ENCODE measurements at regions of chr16 and their contacts with region 1.

Region 1: DNA sequence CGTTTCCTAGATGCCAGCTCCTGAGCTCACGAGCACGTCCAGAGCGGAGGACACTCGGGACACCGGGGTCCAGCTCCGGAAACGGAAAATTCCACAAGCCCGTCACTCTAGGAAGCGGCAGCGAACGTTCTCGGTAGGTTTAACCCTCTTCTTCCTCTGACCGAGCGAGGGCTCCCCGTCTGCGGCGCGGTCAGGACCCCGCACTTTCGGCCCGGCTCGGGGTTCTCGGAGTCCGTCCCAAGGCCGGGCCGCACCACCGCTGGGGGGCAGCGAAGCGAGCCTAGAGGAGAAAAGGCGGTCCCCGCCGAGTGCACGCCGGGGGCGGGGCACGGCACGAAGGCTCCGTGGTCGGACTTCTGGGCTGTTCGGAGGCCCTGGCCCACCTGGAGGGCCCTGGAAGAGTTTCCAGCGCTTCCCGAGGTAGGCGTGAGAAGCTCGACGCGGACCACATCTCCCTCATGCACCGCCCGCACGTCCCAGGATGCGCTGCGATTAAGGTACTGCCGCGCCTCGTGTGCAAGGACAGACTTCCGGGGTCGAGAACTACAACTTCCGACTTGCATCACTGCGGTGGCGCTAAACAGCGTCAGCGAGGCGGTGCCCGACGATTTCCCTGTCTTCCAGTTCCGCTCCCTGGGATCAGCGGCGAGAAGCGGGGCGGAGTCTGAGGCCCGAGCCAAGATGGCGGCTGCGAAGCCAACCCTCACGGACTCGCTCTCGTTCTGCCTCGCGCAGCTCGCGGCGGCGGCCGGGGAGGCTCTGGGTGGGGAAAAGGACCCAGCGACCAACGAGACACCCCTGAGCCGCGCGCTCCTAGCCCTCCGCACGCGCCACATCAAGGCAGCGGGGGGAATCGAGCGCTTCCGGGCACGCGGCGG is at the start of gene ARMC5:
- DNase-seq: peak; percentile 96 to 100 (median 98)

Region 2: DNA sequence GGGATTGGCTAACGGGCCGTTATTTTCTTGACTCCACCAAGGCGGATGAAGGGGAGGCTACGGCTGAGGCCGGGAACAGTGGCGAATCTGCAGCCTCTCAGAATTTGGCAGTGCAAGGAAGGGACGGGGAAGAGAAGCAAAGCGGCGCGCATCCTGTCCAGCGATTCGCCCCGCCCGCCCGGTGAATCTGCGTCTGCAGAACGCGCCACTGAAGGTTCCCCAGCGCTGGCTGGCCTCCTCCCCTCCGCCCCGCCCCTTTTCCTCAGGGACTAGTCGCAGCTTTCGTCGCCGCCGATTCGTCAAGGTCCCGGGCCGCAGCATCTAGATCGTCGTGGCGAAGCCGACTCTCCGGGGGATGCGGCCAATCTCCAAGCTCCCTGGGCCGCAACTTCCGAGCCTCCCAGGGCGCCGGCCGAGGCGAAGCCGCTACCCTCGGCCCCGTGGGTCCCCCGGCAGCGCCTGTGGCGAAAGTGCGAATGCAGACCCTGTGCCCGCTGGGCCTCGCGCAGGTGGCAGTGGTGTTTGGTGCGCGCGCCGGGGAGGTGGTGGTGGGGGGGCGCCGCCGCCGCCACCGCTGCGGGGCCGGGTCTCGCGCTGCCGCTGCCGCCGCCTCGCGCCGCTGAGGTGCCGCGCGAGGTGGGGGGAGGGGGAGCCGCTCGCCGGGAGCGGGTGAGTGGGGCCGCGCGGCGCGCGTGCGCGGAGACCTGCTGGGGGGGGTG is 501.5 kb before region 1 on chr16 and contains the start of gene SETD1A:
- intact Hi-C with region 1: loop called (anchors 10 kb)
- DNase-seq: peak; percentile 94 to 100 (median 97)

Region 3: DNA sequence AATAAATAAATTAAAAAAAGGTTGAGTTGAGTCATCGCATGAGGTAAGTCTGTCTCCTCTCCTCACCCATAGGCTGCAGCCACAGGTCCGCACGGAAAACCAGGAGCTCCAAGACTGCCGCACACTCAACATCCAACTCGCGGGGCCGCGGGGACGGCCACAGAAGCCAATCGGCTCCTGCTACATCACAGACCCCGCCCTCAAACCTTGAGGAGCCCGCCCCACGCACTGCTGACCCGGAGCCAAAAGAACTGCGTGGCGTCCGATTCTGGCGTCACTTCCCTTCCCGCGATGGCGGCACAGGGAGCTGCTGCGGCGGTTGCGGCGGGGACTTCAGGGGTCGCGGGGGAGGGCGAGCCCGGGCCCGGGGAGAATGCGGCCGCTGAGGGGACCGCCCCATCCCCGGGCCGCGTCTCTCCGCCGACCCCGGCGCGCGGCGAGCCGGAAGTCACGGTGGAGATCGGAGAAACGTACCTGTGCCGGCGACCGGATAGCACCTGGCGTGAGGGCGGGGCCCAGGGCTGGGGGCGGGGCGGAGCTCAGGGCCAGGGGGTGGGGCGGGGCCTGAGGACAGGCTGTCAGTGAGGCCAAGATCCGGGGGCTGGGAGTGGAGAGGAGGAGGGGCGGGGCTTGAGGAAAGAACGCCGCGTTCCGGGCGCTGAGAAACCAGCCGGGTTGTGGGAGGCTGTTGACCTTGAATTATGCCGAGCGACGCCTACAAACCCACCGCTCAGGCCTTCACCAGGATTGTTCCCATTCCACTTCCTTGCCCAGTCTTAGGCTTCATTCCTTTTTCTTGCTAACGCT is 341.5 kb before region 1 on chr16 and contains the start of gene KAT8:
- intact Hi-C with region 1: loop called (anchors 10 kb)
- DNase-seq: peak; percentile 97 to 100 (median 99)

Region 4: GRCh38 chr16:31507929-31508705 is 49.0 kb after region 1 on chr16 and contains the start of gene RUSF1:
- intact Hi-C with region 1: loop called (anchors 2 kb)
- DNase-seq: peak; percentile 87 to 99 (median 92)

Region 5: GRCh38 chr16:31572821-31573220 is 113.7 kb after region 1 on chr16:
- intact Hi-C with region 1: no loop called
- DNase-seq: no peak

Region 6: GRCh38 chr16:31868691-31869167 is 409.6 kb after region 1 on chr16:
- intact Hi-C with region 1: loop called (anchors 10 kb)
- DNase-seq: peak in 9 of 10 donors; percentile 46 to 92 (median 81)